PC-9 (cell line): ENCODE measurements at regions of chr12 and their contacts with region 1.

Region 1: GRCh38 chr12:14629832-14630710 is 62.4 kb upstream of the PLBD1 start:
- DNase-seq: peak; percentile 51 to 75
- H3K4me3 ChIP-seq: no peak overlapping the region
- H3K27ac ChIP-seq: no peak overlapping the region
- H3K4me1 ChIP-seq: no peaks in the 10 kb centered on the region
- H3K27me3 ChIP-seq: no peaks in the 10 kb centered on the region
- CTCF ChIP-seq: peak; percentile 94

Region 2: GRCh38 chr12:14716848-14717444 is 86.9 kb after region 1 on chr12:
- CTCF ChIA-PET with region 1: no interaction called
- POLR2A ChIA-PET with region 1: no interaction called
- intact Hi-C with region 1: loop called (anchors 5 kb)
- DNase-seq: peak in 1 of 2 experiments; percentile 20
- H3K4me3 ChIP-seq: no peak overlapping the region
- H3K27ac ChIP-seq: no peak overlapping the region
- H3K4me1 ChIP-seq: no peaks in the 10 kb centered on the region
- H3K27me3 ChIP-seq: no peaks in the 10 kb centered on the region
- CTCF ChIP-seq: peak; percentile 65